OCI-LY7 (cell line): ENCODE measurements at regions of chr13 and their contacts with region 1.

Region 1: DNA sequence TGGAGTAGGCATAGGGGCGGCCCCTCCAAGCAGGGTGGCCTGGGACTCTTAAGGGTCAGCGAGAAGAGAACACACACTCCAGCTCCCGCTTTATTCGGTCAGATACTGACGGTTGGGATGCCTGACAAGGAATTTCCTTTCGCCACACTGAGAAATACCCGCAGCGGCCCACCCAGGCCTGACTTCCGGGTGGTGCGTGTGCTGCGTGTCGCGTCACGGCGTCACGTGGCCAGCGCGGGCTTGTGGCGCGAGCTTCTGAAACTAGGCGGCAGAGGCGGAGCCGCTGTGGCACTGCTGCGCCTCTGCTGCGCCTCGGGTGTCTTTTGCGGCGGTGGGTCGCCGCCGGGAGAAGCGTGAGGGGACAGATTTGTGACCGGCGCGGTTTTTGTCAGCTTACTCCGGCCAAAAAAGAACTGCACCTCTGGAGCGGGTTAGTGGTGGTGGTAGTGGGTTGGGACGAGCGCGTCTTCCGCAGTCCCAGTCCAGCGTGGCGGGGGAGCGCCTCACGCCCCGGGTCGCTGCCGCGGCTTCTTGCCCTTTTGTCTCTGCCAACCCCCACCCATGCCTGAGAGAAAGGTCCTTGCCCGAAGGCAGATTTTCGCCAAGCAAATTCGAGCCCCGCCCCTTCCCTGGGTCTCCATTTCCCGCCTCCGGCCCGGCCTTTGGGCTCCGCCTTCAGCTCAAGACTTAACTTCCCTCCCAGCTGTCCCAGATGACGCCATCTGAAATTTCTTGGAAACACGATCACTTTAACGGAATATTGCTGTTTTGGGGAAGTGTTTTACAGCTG is at the starts of genes BRCA2 and ZAR1L:
- DNase-seq: peak; percentile 94
- H3K4me3 ChIP-seq: peak within 1 kb of the TSS; percentile 79
- H3K27ac ChIP-seq: peak within 1 kb of the TSS; percentile 92
- H3K4me1 ChIP-seq: peaks cover 27% of the 10 kb centered on the region
- CTCF ChIP-seq: no peak
- total RNA-seq, gene BRCA2: 16.9 and 25.8 TPM in 2 replicates
- total RNA-seq, gene ZAR1L: 0.10 and 0.32 TPM in 2 replicates

Region 2: DNA sequence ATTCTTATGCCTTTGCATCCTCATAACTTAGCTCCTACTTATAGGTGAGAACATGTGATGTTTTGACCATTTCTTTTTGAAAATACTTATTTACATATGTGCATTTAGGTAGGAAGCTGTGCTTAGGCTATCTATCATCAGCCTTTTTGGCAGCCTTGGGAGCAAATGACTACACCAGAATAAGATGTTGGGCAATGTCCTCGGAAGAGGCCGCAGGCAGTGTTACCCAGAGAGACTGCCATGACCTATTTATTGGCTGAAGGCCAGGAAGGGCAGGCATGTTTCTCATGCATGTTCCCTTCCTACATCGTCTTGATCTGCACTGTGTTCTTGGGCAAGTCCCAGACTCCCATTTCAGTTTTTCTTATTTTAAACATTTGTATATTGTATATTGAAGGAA is 993.4 kb before region 1 on chr13:
- CTCF ChIA-PET with region 1: no interaction called
- POLR2A ChIA-PET with region 1: no interaction called
- intact Hi-C with region 1: loop called (anchors 5 kb)
- DNase-seq: peak; percentile 41
- H3K4me3 ChIP-seq: peak overlapping the region; percentile 55
- H3K27ac ChIP-seq: peak overlapping the region; percentile 98
- H3K4me1 ChIP-seq: peaks cover 78% of the 10 kb centered on the region
- CTCF ChIP-seq: no peak

Region 3: GRCh38 chr13:32390048-32390447 is 74.6 kb after region 1 on chr13:
- CTCF ChIA-PET with region 1: no interaction called
- POLR2A ChIA-PET with region 1: no interaction called
- intact Hi-C with region 1: no loop called
- DNase-seq: no peak
- H3K4me3 ChIP-seq: no peak overlapping the region
- H3K27ac ChIP-seq: no peak overlapping the region
- H3K4me1 ChIP-seq: no peaks in the 10 kb centered on the region
- CTCF ChIP-seq: no peak

Region 4: DNA sequence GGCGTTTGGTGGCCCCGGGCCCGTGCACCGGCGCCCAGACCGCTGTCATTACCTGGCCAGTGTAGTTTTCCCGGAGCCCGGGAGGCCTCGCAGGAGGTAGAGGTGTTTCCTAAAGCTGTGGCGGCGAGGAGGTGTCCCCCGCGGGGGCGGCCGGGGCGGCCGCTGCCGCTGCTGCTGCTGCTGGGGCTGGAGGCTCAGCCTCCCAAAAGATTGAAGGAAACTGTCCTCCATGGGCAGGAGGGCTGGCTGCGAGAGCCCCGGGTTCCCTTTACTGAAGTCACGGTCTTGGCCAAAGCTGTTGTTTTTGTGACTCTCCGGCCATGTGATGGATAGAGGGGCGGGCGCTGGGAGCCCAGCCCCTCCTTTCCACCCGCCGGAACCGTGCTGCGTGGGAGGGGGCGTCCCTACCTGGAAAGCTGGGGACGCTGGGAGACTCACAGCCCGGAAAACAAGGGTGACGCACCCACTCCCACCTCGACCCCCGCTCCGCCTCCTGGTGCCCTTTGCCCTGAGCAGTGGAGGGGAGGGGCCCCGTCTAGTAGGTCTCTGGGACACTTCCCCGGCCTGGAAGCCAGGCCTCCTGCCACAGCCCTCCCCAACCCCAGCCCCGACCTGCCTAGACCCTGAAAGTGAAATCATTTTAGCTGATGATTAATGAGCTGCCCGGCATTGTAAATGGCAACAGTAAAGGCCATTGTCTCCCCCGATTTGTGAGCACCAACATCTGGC is 112.6 kb after region 1 on chr13 and contains the start of gene N4BP2L1:
- CTCF ChIA-PET with region 1: no interaction called
- POLR2A ChIA-PET with region 1: interaction called, 6 read pairs
- intact Hi-C with region 1: loop called (anchors 2 kb)
- DNase-seq: peak; percentile 66
- H3K4me3 ChIP-seq: peak within 1 kb of the TSS; percentile 96
- H3K27ac ChIP-seq: peak within 1 kb of the TSS; percentile 60
- H3K4me1 ChIP-seq: peaks cover 25% of the 10 kb centered on the region
- CTCF ChIP-seq: no peak
- total RNA-seq, gene N4BP2L1: 12.8 and 14.6 TPM in 2 replicates

Region 5: DNA sequence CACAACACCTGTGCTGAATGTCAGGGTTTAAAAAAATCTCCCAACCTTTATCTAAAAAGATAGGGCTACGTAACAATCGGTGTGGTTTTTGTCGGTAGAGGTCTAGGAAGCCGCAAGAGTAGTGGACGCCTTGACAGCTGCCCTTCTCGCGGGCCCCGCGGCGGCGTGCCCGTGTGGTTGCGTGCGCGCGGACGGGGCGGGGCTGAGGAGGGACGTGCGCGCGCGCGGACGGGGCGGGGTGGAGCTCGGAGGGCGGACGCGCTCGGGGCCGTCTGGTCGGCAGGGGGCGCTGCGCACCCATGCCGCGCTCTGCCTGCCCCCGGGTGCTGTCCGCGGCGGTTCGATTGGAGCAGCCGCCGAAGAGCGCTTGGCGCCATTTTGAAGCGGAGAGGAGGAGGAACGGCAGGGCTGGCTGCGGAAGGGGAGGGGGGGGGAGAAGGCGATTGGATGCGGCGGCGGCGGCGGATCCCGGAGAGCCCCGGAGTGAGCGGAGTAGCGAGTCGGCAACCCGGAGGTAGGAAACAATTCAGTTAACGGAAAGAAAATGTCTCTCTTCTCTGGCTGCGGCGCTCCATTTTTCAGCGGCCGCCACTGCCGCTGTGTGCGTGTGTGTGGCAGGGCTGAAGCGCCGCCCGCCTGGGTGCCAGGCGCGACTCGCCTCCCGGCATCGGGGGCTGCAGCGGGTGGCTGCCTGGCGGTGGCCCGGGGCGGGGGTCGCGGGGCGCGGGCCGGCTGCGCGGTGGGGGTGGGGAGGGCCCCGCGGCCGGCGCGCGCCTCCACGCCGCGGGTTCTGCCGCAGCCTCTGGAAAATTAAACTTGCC is 270.9 kb after region 1 on chr13 and contains the start of gene PDS5B:
- CTCF ChIA-PET with region 1: no interaction called
- POLR2A ChIA-PET with region 1: interaction called, 3 read pairs
- intact Hi-C with region 1: loop called (anchors 5 kb)
- DNase-seq: peak; percentile 95
- H3K4me3 ChIP-seq: peak within 1 kb of the TSS; percentile 91
- H3K27ac ChIP-seq: peak within 1 kb of the TSS; percentile 81
- H3K4me1 ChIP-seq: peaks cover 32% of the 10 kb centered on the region
- CTCF ChIP-seq: peak; percentile 84
- total RNA-seq, gene PDS5B: 34.1 and 41.2 TPM in 2 replicates